Heart left ventricle (tissue), 16 donors: ENCODE measurements at regions of chr2 and their contacts with region 1.

Region 1: DNA sequence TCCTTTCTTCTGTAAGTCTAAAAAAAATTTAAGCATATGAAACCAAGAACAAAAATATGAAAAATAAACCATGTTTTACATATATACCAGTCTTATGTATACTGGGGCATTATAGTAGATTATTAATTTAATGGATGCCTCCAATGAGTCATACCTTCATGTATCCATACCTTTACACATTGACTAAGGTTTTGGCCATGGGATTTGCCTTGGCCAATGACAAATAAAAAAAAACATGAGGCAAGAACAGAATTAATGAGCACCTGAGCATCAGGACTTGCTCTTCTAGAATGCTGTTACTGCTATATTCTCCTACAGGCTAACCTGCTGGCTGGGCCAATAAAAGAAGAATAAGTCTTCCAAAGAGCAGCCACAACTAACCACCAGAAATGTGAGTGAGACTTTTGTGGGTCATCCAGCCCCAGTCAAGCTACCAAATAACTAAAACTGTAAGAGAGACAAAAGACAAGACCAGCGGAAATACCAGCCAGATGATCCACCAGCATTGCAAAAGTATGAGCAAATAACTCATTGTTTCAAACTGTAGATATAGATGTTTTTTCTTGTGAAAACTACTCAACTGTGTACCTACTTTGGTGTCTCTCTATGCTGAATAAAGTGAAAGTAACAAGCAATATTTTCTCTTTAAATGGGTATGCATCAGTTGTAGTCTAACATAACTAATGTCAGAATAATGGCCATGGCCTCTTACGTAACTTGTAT is 749.6 kb upstream of the VRK2 start:
- DNase-seq: no peak
- ATAC-seq: no peak
- H3K4me3 ChIP-seq: no peak overlapping the region
- H3K27ac ChIP-seq: no peak overlapping the region
- H3K4me1 ChIP-seq: no peaks in the 10 kb centered on the region
- H3K27me3 ChIP-seq: no peaks in the 10 kb centered on the region
- CTCF ChIP-seq: no peak
- POLR2A ChIP-seq: no peak

Region 2: DNA sequence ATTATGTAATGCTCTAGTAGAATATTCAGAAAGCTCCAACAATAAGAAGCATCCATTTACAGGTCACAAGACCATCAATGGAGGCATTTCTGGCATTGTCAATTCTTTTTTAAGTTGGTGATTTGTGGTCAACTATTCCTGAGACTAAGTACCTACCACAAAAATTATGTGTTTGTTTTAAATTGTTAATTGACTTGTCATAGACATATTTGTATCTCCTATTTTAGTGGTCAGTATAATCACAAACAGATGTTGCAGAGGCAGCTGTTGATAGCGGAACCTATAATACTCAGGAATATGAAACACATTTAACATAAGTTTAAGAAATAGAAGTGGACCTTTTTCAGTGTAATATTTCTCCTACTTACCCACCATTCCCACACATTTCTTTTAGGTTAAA is 683.0 kb before region 1 on chr2:
- intact Hi-C with region 1: loop called in 1 of 10 experiments (anchors 10 kb)
- DNase-seq: no peak
- ATAC-seq: no peak
- H3K4me3 ChIP-seq: no peak overlapping the region
- H3K27ac ChIP-seq: no peak overlapping the region
- H3K4me1 ChIP-seq: no peaks in the 10 kb centered on the region
- H3K27me3 ChIP-seq: no peaks in the 10 kb centered on the region
- CTCF ChIP-seq: no peak
- POLR2A ChIP-seq: no peak

Region 3: GRCh38 chr2:57343391-57344006 is 46.5 kb after region 1 on chr2:
- intact Hi-C with region 1: no loop called
- DNase-seq: no peak
- ATAC-seq: no peak
- H3K4me3 ChIP-seq: no peak overlapping the region
- H3K27ac ChIP-seq: no peak overlapping the region
- H3K4me1 ChIP-seq: no peaks in the 10 kb centered on the region
- H3K27me3 ChIP-seq: no peaks in the 10 kb centered on the region
- CTCF ChIP-seq: no peak
- POLR2A ChIP-seq: no peak